ENCODE measurements at regions of chr21 and their contacts with region 1.

Region 1: GRCh38 chr21:31354604-31355443 is 10.8 kb upstream of the TIAM1 start:
- DNase-seq: peak; percentile 94
- H3K4me3 Mint-ChIP-seq: peak overlapping the region; percentile 2
- H3K27ac Mint-ChIP-seq: peak overlapping the region; percentile 88
- H3K4me1 Mint-ChIP-seq: peaks cover 47% of the 10 kb centered on the region
- H3K27me3 Mint-ChIP-seq: no peaks in the 10 kb centered on the region

Region 2: GRCh38 chr21:31132574-31133242 is 222.1 kb before region 1 on chr21:
- CTCF ChIA-PET with region 1: no interaction called
- intact Hi-C with region 1: loop called (anchors 1 kb)
- DNase-seq: peak; percentile 89
- H3K4me3 Mint-ChIP-seq: peak overlapping the region; percentile 32
- H3K27ac Mint-ChIP-seq: peak overlapping the region; percentile 83
- H3K4me1 Mint-ChIP-seq: peaks cover 64% of the 10 kb centered on the region
- H3K27me3 Mint-ChIP-seq: no peaks in the 10 kb centered on the region

Region 3: DNA sequence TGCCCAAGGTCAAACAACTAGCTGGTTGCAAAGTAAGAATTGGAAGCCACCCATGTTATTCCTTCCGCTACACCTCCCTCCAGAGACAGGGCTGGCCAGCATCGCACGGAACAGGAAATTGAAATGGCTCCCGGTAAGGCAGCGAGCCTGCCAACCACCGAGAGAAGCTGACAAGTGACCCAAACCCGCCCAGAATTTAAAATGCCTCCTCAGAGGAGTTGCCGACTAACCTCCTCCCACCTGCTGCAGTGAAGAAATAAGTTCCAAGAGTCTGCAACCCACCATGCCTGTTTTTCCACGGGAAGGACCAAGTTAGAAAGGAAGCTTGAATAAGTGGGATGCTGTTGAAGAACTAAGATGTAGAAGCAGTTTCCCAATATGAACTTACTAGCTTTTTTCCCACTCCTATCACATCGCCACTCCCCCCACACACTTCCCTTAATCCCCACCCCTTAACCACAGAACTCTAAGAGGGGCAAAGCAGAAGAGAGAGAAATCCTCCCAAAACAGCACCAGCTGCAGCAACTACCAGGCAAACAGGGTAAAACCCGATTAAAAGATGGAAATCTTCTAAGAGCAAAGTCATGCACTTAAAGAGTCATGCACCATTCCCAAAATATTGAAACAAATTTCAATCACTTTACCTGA is 89.3 kb before region 1 on chr21:
- CTCF ChIA-PET with region 1: no interaction called
- intact Hi-C with region 1: no loop called
- DNase-seq: peak; percentile 12
- H3K4me3 Mint-ChIP-seq: peak overlapping the region; percentile 1
- H3K27ac Mint-ChIP-seq: no peak overlapping the region
- H3K4me1 Mint-ChIP-seq: peaks cover 22% of the 10 kb centered on the region
- H3K27me3 Mint-ChIP-seq: no peaks in the 10 kb centered on the region

Region 4: DNA sequence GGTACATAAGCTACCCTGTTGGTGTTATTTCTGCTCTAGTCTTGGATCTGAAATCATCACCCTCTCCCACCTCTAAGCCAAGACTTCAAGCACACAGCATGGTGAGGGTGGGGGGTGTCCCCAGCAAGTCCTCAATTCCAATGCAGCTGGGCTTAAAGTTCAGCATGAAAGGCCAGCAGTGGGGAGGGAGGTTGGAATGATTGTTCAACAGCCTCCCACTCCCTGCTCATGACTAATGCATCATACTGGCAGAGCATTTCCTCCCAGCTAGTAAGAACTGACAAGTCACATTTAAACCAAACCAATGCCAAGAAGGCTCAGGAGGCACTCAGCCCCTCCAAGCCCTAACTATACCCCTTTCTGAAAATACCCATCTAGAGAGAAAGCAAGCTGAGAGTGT is 60.8 kb before region 1 on chr21:
- CTCF ChIA-PET with region 1: interaction called, 3 read pairs
- intact Hi-C with region 1: loop called (anchors 1 kb)
- DNase-seq: peak; percentile 88
- H3K4me3 Mint-ChIP-seq: no peak overlapping the region
- H3K27ac Mint-ChIP-seq: peak overlapping the region; percentile 84
- H3K4me1 Mint-ChIP-seq: peaks cover 44% of the 10 kb centered on the region
- H3K27me3 Mint-ChIP-seq: no peaks in the 10 kb centered on the region

Region 5: GRCh38 chr21:31397515-31397926 is 42.7 kb after region 1 on chr21:
- CTCF ChIA-PET with region 1: no interaction called
- intact Hi-C with region 1: loop called (anchors 1 kb)
- DNase-seq: no peak
- H3K4me3 Mint-ChIP-seq: no peak overlapping the region
- H3K27ac Mint-ChIP-seq: no peak overlapping the region
- H3K4me1 Mint-ChIP-seq: peaks cover 46% of the 10 kb centered on the region
- H3K27me3 Mint-ChIP-seq: no peaks in the 10 kb centered on the region

Region 6: DNA sequence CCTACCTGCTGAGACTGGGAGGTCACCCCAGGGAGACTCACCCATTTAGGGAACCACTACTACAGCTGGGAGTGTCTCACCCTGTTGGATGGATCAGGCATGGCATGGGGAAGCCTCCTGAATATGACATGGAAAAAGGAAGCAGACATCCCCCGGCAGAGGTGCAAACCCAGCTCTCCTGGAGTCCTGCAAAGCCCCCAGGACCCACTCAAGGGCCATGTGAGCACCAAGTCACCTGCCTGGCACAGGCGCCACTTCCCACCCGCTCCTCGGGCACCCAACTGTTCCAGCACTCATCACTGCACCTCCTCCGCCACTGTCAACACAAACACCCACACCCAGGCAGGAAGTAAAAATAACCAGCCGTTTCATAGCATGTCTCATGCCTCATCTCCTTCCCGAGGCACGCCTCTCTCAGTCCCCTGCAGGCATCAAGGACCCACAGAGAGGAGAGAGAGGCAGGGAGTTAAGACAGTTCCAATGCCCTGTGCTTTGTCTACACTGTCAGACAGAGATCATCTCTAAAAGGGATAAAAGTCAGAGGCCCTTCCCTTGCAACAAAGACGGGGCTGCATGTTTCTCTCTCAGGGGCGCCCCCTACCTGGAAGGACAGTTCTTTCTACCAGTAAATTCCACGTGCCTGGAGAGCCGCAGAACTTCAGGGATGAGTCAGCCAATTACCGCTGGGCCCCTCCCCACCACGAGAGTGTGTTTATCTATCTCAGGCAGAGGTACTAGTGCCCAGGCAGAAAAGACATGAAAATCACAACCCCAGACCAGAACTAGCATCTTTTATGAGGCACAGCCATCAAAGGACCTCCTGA is 154.6 kb after region 1 on chr21:
- CTCF ChIA-PET with region 1: no interaction called
- intact Hi-C with region 1: loop called (anchors 1 kb)
- DNase-seq: peak; percentile 96
- H3K4me3 Mint-ChIP-seq: peak overlapping the region; percentile 43
- H3K27ac Mint-ChIP-seq: peak overlapping the region; percentile 80
- H3K4me1 Mint-ChIP-seq: peaks cover 33% of the 10 kb centered on the region
- H3K27me3 Mint-ChIP-seq: no peaks in the 10 kb centered on the region

Region 7: GRCh38 chr21:32278518-32279376 is 923.9 kb after region 1 on chr21 and contains the start of gene MIS18A:
- CTCF ChIA-PET with region 1: no interaction called
- intact Hi-C with region 1: loop called (anchors 1 kb)
- DNase-seq: peak; percentile 98
- H3K4me3 Mint-ChIP-seq: peak within 1 kb of the TSS; percentile 100
- H3K27ac Mint-ChIP-seq: peak within 1 kb of the TSS; percentile 90
- H3K4me1 Mint-ChIP-seq: peaks cover 17% of the 10 kb centered on the region
- H3K27me3 Mint-ChIP-seq: no peaks in the 10 kb centered on the region
- total RNA-seq, gene MIS18A: 37.4 to 37.8 TPM